ENCODE measurements at regions of chr21 and their contacts with region 1.

Region 1: GRCh38 chr21:44338971-44339910 is at the start of gene CFAP410:
- DNase-seq: peak; percentile 94 to 96
- H3K4me3 ChIP-seq: peak within 1 kb of the TSS; percentile 95
- H3K4me3 Mint-ChIP-seq: peak within 1 kb of the TSS; percentile 91
- H3K27ac Mint-ChIP-seq: peak within 1 kb of the TSS; percentile 97
- H3K4me1 ChIP-seq: peaks cover 39% of the 10 kb centered on the region
- H3K4me1 Mint-ChIP-seq: peaks cover 41% of the 10 kb centered on the region
- H3K27me3 ChIP-seq: no peaks in the 10 kb centered on the region
- H3K27me3 Mint-ChIP-seq: no peaks in the 10 kb centered on the region
- CTCF ChIP-seq: no peak
- total RNA-seq, gene CFAP410: 16.5 and 20.1 TPM in 2 replicates

Region 2: DNA sequence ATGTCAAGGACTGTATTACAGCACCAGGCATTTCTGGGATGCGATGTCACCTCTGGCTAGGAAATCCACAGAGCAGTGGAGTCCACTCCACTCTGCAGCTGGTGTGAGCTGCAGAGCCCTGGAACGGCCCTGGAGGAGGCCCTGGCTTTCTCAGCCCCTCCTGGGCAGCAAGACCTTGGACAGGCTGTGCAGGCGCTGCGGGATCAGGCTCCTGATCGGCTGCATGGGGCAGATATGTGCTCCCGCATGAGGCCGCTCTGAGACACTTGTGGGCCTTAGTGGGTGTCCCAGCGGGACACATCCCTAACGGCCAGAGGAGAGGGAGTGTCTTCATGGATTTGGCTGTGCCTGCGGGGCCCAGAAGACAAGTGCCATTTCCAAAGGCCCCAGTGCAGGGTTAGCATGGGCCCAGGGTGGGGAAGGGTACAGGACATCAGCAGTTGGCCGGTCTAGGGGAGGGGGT is 83.7 kb before region 1 on chr21:
- CTCF ChIA-PET with region 1: no interaction called
- POLR2A ChIA-PET with region 1: no interaction called
- intact Hi-C with region 1: no loop called
- DNase-seq: peak in 1 of 2 experiments; percentile 27
- H3K4me3 ChIP-seq: no peak overlapping the region
- H3K4me3 Mint-ChIP-seq: no peak overlapping the region
- H3K27ac Mint-ChIP-seq: no peak overlapping the region
- H3K4me1 ChIP-seq: no peaks in the 10 kb centered on the region
- H3K4me1 Mint-ChIP-seq: no peaks in the 10 kb centered on the region
- H3K27me3 ChIP-seq: no peaks in the 10 kb centered on the region
- H3K27me3 Mint-ChIP-seq: no peaks in the 10 kb centered on the region
- CTCF ChIP-seq: no peak

Region 3: DNA sequence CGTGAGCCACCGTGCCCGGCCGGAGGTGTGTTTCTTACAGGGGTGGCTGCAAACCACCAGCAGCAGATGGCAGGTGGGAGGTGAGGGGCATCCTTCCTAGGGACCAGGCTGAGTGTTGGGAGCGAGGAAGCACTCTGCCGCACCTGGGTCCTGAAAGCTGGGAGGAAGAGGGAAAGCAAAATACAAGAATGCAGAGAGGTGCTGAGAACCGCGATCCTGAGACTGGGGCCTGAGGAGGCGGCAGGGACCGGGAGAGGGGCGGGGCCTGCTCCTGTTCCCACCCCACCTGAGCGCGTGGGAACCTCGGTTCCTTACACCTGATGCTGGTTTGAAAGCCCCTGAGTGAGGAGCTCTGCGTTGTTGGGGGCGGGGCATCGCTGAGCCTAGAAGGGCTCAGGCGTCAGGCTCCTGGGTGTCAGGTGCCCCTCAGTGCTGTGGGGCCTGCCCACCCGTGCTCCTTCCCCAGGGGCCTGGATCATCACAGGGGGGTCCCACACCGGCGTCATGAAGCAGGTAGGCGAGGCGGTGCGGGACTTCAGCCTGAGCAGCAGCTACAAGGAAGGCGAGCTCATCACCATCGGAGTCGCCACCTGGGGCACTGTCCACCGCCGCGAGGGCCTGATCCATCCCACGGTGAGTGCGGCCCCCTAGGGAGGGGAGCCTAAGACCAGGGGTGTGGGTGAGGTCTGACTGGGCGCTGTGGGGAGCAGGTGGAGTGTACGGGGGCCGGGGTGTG is 29.6 kb after region 1 on chr21:
- CTCF ChIA-PET with region 1: interaction called, 8 read pairs
- POLR2A ChIA-PET with region 1: interaction called, 10 read pairs
- intact Hi-C with region 1: no loop called
- DNase-seq: peak; percentile 44
- H3K4me3 ChIP-seq: peak overlapping the region; percentile 35
- H3K4me3 Mint-ChIP-seq: peak overlapping the region; percentile 68
- H3K27ac Mint-ChIP-seq: no peak overlapping the region
- H3K4me1 ChIP-seq: peaks cover 8% of the 10 kb centered on the region; the same call in 1 of the 2 replicates
- H3K4me1 Mint-ChIP-seq: no peaks in the 10 kb centered on the region
- H3K27me3 ChIP-seq: no peaks in the 10 kb centered on the region
- H3K27me3 Mint-ChIP-seq: no peaks in the 10 kb centered on the region
- CTCF ChIP-seq: peak in 1 of 2 experiments; percentile 13

Region 4: GRCh38 chr21:44428281-44428942 is 89.2 kb after region 1 on chr21:
- CTCF ChIA-PET with region 1: no interaction called
- POLR2A ChIA-PET with region 1: interaction called, 14 read pairs
- intact Hi-C with region 1: no loop called
- DNase-seq: peak; percentile 59
- H3K4me3 ChIP-seq: no peak overlapping the region
- H3K4me3 Mint-ChIP-seq: no peak overlapping the region
- H3K27ac Mint-ChIP-seq: no peak overlapping the region
- H3K4me1 ChIP-seq: no peaks in the 10 kb centered on the region
- H3K4me1 Mint-ChIP-seq: no peaks in the 10 kb centered on the region
- H3K27me3 ChIP-seq: no peaks in the 10 kb centered on the region
- H3K27me3 Mint-ChIP-seq: no peaks in the 10 kb centered on the region
- CTCF ChIP-seq: no peak

Region 5: GRCh38 chr21:44444286-44444931 is 105.2 kb after region 1 on chr21:
- CTCF ChIA-PET with region 1: no interaction called
- POLR2A ChIA-PET with region 1: no interaction called
- intact Hi-C with region 1: no loop called
- DNase-seq: peak; percentile 20 to 37
- H3K4me3 ChIP-seq: no peak overlapping the region
- H3K4me3 Mint-ChIP-seq: no peak overlapping the region
- H3K27ac Mint-ChIP-seq: no peak overlapping the region
- H3K4me1 ChIP-seq: 0 out of 2 replicates have a peak, but pooled peaks cover 6% of the 10 kb centered on the region
- H3K4me1 Mint-ChIP-seq: no peaks in the 10 kb centered on the region
- H3K27me3 ChIP-seq: no peaks in the 10 kb centered on the region
- H3K27me3 Mint-ChIP-seq: no peaks in the 10 kb centered on the region
- CTCF ChIP-seq: no peak

Region 6: GRCh38 chr21:44482581-44483287 is 143.5 kb after region 1 on chr21:
- CTCF ChIA-PET with region 1: interaction called, 4 read pairs
- POLR2A ChIA-PET with region 1: no interaction called
- intact Hi-C with region 1: loop called (anchors 2 kb)
- DNase-seq: peak; percentile 80 to 88
- H3K4me3 ChIP-seq: no peak overlapping the region
- H3K4me3 Mint-ChIP-seq: peak overlapping the region; percentile 40
- H3K27ac Mint-ChIP-seq: peak overlapping the region; percentile 69
- H3K4me1 ChIP-seq: peaks cover 17% of the 10 kb centered on the region
- H3K4me1 Mint-ChIP-seq: peaks cover 10% of the 10 kb centered on the region
- H3K27me3 ChIP-seq: no peaks in the 10 kb centered on the region
- H3K27me3 Mint-ChIP-seq: no peaks in the 10 kb centered on the region
- CTCF ChIP-seq: no peak

Measured in Caco-2 (cell line).